Esophagus muscularis mucosa (tissue), 4 donors: ENCODE measurements at regions of chr5 and their contacts with region 1.

Region 1: GRCh38 chr5:176573564-176574296 is 24.6 kb downstream of the CDHR2 start:
- DNase-seq: no peak
- H3K4me3 ChIP-seq: no peak overlapping the region
- H3K27ac ChIP-seq: no peak overlapping the region
- H3K4me1 ChIP-seq: peaks cover 0 to 6% (median 0%) of the 10 kb centered on the region in 4 donors
- H3K27me3 ChIP-seq: peaks cover 0 to 53% (median 0%) of the 10 kb centered on the region in 4 donors
- CTCF ChIP-seq: peak; percentile 52 to 80 (median 63)
- EP300 ChIP-seq: no peak
- POLR2A ChIP-seq: no peak

Region 2: DNA sequence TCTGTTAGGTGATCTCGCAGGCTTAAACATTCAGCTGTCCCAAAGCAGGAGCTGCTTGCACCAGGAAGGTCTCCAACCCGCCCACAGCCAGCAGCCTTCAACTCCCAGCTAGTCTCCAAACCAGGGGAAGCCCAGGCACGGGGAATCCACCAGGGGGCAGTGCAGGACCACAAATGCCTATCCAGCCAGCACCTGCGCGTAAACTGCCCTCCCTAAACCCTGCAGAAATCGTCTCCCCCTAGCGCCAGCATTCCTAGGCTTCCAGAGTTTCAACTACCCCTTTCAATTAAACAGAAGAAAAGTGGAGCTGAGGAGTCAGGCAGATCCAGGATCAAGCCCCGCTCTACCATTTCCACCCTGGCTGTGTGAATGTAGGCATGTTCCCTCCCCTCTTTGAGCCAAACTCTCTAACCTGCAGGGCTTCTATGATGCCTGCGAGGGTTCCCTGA is 843.9 kb before region 1 on chr5:
- intact Hi-C with region 1: loop called (anchors 5 kb)
- DNase-seq: peak; percentile 98
- H3K4me3 ChIP-seq: no peak overlapping the region
- H3K27ac ChIP-seq: no peak overlapping the region
- H3K4me1 ChIP-seq: peaks cover 0 to 9% (median 8%) of the 10 kb centered on the region in 4 donors
- H3K27me3 ChIP-seq: peaks cover 0 to 72% (median 9%) of the 10 kb centered on the region in 4 donors
- CTCF ChIP-seq: peak; percentile 82 to 93 (median 92)
- EP300 ChIP-seq: no peak
- POLR2A ChIP-seq: no peak

Region 3: DNA sequence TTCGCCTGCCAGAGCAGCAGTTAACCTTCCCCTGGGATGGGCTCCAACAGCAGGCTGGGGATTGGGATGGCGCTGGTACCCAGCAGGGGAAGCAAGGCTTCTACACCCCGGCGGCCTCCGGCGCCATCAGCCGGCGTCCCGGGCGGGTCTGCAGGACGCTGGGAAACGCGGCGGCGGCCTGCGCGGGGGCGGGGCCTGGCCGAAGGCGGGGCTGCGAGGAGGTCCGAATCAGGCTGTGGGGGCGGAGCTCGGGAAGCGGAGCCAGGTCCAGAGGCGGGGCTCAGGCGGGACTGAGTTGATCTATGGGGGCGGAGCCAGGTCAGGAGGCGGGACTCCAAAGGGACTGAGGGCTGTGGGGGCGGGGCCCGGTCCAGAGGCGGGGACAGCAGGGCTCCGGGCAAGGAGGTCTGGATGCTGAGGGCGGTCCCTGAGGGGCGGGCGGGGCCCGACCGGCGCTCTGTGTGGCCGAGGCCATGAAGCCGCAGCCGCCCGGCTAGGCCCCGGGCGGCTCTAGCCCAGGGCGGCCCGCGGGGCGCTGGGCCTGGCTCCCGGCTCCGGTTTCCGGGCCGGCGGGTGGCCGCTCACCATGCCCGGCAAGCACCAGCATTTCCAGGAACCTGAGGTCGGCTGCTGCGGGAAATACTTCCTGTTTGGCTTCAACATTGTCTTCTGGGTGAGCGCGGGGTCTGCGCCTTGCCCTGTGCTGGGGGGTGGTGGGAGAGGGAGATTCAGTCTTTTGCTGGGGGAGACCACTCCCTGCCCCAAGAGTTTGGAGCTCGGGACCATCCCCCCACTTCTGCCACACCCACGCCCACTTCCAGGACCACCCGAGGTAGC is 73.5 kb after region 1 on chr5 and contains the start of gene TSPAN17:
- intact Hi-C with region 1: loop called (anchors 2 kb)
- DNase-seq: peak; percentile 100
- H3K4me3 ChIP-seq: peak within 1 kb of the TSS; percentile 78 to 85 (median 84)
- H3K27ac ChIP-seq: peak within 1 kb of the TSS; percentile 80 to 87 (median 83)
- H3K4me1 ChIP-seq: peaks cover 17 to 47% (median 39%) of the 10 kb centered on the region in 4 donors
- H3K27me3 ChIP-seq: no peaks in the 10 kb centered on the region
- CTCF ChIP-seq: peak; percentile 20 to 46 (median 25)
- EP300 ChIP-seq: no peak
- POLR2A ChIP-seq: no peak
- total RNA-seq, gene TSPAN17: 8.3 to 18.6 (median 14.8) TPM